Dorsolateral prefrontal cortex (tissue), 120 donors: ENCODE measurements at regions of chr17 and their contacts with region 1.

Region 1: DNA sequence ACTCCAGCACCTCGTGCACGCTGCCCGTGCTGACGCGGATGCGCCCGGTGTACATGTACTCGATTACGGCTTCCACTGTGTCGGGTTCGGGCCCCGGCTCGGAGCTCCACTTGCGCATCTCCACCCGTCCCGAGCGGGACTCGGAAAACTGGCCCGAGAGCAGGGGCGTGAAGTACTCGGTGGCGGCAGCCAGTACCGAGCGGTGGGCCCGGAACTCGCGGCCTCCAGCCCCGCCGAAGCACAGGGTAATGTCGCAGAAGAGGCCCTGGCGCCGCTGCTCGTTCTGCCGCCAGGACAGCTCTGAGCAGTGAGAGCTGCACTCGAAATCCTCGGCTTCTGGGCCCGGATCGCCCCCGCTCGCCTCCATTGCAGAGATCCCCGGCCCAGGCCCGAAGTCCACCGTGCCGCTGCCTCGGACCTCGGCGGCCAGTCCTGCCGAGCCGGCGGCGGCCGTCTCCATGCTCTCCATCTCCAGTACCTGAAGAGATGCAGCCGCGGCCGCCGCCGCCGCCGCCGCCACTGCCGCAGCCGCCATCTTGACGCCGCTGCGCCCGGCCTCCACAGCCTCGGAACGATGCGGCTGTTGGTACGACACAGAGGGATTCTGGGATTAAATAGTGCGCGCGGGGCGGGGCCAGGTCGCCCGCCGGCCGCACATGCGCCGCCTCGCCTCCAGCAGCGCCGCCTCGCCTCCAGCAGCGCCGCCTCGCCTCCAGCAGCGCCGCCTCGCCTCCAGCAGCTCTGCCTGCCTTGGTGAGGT is at the start of gene KLHL11:
- DNase-seq: peak; percentile 83 to 94 (median 90)
- H3K4me3 ChIP-seq: peak within 1 kb of the TSS; percentile 74 to 100 (median 97)
- H3K27ac ChIP-seq: peak within 1 kb of the TSS; percentile 46 to 98 (median 92)
- H3K27me3 ChIP-seq: no peaks in the 10 kb centered on the region
- CTCF ChIP-seq: peak in 47 of 56 donors; percentile 9 to 75 (median 51)
- total RNA-seq, gene KLHL11: 16.7 to 56.5 (median 42.7) TPM

Region 2: DNA sequence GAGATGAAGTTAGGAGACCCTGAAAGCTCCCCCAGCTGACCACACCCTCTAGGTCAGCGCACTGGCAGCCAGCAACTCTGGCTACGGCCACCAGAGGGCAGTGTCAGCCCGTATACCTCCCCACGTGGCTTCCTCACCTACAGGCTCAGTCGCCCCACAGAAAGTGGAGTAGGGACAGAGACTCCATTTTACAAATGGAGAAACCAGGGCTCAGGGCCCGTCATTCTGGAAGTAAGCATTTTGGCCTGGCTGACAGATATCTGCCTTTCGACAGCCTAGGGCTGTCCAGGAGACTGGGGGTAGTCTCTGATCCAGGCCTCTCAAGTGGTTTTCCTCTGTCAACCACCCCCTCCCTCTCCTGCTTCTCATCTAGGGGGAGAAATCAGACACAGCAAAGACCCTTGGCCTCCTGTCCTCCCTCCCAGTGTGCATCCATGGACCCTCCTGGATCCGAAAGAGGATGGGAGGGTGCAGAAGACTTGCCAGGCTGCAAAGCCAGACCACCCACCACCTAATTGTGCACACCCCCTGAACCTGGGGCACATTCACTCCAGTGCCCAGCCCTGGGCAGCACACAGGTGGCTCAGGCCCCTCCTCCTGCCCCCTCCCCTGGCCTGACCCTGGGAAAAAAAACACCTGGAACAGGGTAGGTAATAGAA is 126.8 kb before region 1 on chr17:
- intact Hi-C with region 1: loop called in 1 of 2 experiments (anchors 10 kb)
- DNase-seq: peak; percentile 68 to 88 (median 81)
- H3K4me3 ChIP-seq: peak overlapping the region in 1 of 59 donors; percentile 7
- H3K27ac ChIP-seq: no peak overlapping the region
- H3K27me3 ChIP-seq: peaks cover 0 to 46% (median 22%) of the 10 kb centered on the region in 45 donors
- CTCF ChIP-seq: peak; percentile 88 to 100 (median 99)

Region 3: DNA sequence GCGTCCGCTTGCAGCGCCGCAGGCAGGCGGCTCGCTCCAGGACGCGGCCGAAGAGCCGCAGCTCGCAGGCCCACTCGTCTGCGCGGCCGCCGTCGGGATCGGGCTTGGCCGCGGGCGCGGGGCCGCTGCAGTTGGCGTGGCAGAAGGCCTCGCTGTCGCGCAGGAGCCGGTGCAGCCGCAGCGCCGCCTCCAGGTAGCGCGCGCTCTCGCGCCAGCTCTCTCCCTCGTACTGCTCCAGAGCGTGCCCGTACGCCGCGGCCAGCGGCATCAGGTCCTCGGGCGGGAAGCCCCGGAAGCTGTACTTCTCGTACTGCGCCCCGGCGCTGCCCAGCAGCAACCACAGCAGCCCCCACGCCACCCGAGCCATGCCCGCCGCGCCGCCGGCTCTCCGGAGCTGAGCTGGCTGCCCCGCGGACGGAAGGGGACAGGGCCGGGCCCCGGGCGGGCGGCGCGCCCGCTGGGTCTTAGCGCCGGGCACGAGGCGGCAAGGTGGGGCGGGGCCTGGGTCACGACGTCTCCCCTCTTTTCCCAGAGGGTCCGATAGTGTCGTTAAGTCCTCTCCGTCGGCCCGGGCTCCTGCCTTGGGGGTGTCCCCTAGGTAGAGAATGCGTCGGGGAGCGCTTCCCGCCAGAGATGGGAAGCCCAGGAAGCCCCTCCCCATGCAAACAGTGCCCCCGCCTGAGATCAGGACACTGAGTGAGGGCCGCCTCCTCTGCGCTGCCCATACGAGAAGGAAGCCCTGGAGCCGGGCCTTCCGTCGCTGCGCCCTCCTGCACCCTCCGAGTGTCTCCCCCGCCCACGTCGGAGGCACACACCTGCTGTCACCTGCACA is 53.3 kb before region 1 on chr17 and contains the start of gene P3H4:
- intact Hi-C with region 1: loop called (anchors 2 kb)
- DNase-seq: peak; percentile 55 to 86 (median 76)
- H3K4me3 ChIP-seq: peak within 1 kb of the TSS; percentile 61 to 89 (median 75)
- H3K27ac ChIP-seq: peak within 1 kb of the TSS in 35 of 59 donors; percentile 3 to 87 (median 45)
- H3K27me3 ChIP-seq: no peaks in the 10 kb centered on the region
- CTCF ChIP-seq: peak; percentile 12 to 83 (median 66)
- total RNA-seq, gene P3H4: 5.0 to 25.5 (median 10.9) TPM

Region 4: GRCh38 chr17:41918314-41919164 is 53.5 kb after region 1 on chr17 and contains the start of gene ACLY:
- intact Hi-C with region 1: loop called (anchors 2 to 5 kb)
- DNase-seq: peak; percentile 93 to 99 (median 97)
- H3K4me3 ChIP-seq: peak within 1 kb of the TSS; percentile 74 to 99 (median 94)
- H3K27ac ChIP-seq: peak within 1 kb of the TSS in 58 of 59 donors; percentile 29 to 92 (median 84)
- H3K27me3 ChIP-seq: no peaks in the 10 kb centered on the region
- CTCF ChIP-seq: peak in 19 of 56 donors; percentile 3 to 47 (median 24)
- total RNA-seq, gene ACLY: 51.8 to 126 (median 85.4) TPM

Region 5: GRCh38 chr17:41930009-41930832 is 65.2 kb after region 1 on chr17 and contains the start of gene ODAD4:
- intact Hi-C with region 1: loop called in 1 of 2 experiments (anchors 2 kb)
- DNase-seq: peak; percentile 94 to 98 (median 97)
- H3K4me3 ChIP-seq: peak within 1 kb of the TSS; percentile 51 to 86 (median 71)
- H3K27ac ChIP-seq: peak within 1 kb of the TSS in 58 of 59 donors; percentile 32 to 97 (median 88)
- H3K27me3 ChIP-seq: no peaks in the 10 kb centered on the region
- CTCF ChIP-seq: peak in 55 of 56 donors; percentile 29 to 72 (median 54)
- total RNA-seq, gene ODAD4: 1.9 to 10.7 (median 5.1) TPM

Region 6: GRCh38 chr17:42142371-42142896 is 277.4 kb after region 1 on chr17:
- intact Hi-C with region 1: no loop called
- DNase-seq: peak in 1 of 10 donors; percentile 48
- H3K4me3 ChIP-seq: peak overlapping the region in 1 of 59 donors; percentile 10
- H3K27ac ChIP-seq: peak overlapping the region in 37 of 59 donors; percentile 2 to 74 (median 47)
- H3K27me3 ChIP-seq: no peaks in the 10 kb centered on the region
- CTCF ChIP-seq: no peak